T-cell (primary cell): ENCODE measurements at regions of chr3 and their contacts with region 1.

Region 1: DNA sequence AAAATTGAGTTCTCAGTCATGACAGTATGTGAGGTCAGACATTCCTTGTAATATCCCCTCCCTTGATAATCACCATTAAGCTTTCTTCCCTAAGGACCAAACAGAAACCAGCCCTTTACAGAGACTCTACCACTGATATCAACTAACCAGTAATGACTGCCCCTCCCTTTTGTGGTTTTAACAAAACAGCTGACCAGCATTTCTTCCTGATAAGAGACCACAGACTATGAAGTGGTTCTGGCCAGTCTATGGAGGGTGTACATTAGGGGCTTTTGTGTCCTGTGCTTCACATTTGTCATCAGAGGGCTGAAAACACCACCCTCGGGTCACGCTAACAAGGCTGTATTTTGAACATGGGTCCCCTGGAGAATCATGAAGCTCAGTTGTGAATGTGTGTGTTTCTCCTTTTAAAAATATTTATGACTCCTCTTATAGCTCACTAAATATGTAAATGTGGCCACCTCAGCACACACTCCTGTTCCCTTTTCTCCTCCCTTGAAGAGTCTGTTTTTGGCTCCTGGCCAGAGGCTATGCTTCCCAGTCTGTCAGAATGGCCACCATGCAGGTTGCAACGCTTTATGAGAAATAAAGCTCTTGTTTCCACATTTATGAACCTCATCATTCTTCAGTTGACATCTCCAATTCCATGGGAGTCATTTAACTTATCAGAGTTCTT is 239.3 kb downstream of the CPNE4 start:
- DNase-seq: no peak
- ATAC-seq: no peak
- H3K4me3 ChIP-seq: no peak overlapping the region
- H3K4me3 Mint-ChIP-seq: no peak overlapping the region
- H3K27ac ChIP-seq: no peak overlapping the region
- H3K27ac Mint-ChIP-seq: no peak overlapping the region
- H3K4me1 ChIP-seq: peaks cover 0 to 5% of the 10 kb centered on the region in 2 experiments
- H3K4me1 Mint-ChIP-seq: peaks cover 6 to 9% (median 8%) of the 10 kb centered on the region in 3 donors
- H3K27me3 ChIP-seq: peaks cover 0 to 5% of the 10 kb centered on the region in 2 experiments
- H3K27me3 Mint-ChIP-seq: peaks cover 12 to 14% of the 10 kb centered on the region in 2 donors

Region 2: DNA sequence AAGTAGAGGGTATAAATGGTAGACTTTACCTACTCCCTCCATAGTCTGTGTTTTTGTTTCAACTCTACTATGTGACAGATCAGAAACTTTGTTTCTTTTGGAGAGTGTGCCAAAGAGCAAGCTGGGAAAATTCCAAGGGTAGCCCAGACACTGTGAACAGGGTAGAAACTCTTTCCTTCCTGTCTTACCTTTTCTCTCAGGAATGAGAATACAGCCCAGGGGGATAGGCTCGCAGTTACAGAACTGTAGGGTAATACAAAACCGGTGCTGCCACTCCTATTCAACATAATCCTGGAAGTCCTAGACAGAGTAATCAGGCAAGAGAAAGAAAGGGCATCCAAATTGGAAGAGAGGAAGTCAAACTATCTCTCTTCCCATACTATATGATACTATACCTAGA is 17.0 kb before region 1 on chr3:
- CTCF ChIA-PET with region 1: interaction called in 1 of 2 experiments, 10 read pairs
- POLR2A ChIA-PET with region 1: no interaction called
- DNase-seq: no peak
- ATAC-seq: no peak
- H3K4me3 ChIP-seq: no peak overlapping the region
- H3K4me3 Mint-ChIP-seq: no peak overlapping the region
- H3K27ac ChIP-seq: no peak overlapping the region
- H3K27ac Mint-ChIP-seq: no peak overlapping the region
- H3K4me1 ChIP-seq: no peaks in the 10 kb centered on the region
- H3K4me1 Mint-ChIP-seq: no peaks in the 10 kb centered on the region
- H3K27me3 ChIP-seq: no peaks in the 10 kb centered on the region
- H3K27me3 Mint-ChIP-seq: peaks cover 8 to 21% of the 10 kb centered on the region in 2 donors

Region 3: DNA sequence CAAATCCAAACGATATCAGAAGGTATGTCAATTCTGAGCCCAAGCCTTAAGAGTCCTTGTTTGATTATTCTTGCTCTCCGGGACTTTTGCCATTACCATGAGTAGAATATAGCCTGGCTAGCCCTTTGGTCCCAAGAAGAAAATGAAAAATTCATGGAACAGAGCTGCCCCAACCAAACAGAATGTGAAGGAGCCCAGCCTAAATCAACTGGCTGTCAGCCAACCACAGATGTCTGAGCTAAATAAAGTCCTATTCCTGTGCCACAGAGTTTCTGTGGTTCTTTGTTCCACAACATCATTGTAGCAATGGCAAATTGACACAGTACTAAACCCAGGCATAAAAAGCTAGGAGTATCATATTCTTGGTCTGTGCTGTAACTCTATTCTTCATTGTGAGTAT is 54.1 kb after region 1 on chr3:
- CTCF ChIA-PET with region 1: no interaction called
- POLR2A ChIA-PET with region 1: no interaction called
- DNase-seq: no peak
- ATAC-seq: no peak
- H3K4me3 ChIP-seq: no peak overlapping the region
- H3K4me3 Mint-ChIP-seq: no peak overlapping the region
- H3K27ac ChIP-seq: no peak overlapping the region
- H3K27ac Mint-ChIP-seq: no peak overlapping the region
- H3K4me1 ChIP-seq: no peaks in the 10 kb centered on the region
- H3K4me1 Mint-ChIP-seq: no peaks in the 10 kb centered on the region
- H3K27me3 ChIP-seq: peaks cover 0 to 2% of the 10 kb centered on the region in 2 experiments
- H3K27me3 Mint-ChIP-seq: peaks cover 1 to 3% of the 10 kb centered on the region in 2 donors

Region 4: DNA sequence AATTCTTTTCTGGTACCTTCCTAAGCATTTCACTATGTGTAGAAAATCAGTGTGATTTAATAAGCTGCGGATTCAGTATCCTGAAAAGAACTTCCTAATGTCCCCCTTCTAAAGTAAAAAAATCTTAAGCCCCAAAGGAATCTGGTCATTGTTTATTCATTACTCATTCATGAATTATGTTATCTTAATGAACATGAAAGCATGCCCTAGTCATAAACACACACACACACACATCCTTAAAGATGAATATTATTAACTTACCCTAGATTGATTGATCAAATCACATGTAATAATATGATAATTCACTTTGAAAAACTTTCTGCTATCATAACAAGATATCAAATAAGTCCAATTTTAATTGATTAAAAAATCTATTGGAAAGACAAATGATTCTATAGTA is 1507.9 kb after region 1 on chr3:
- CTCF ChIA-PET with region 1: no interaction called
- POLR2A ChIA-PET with region 1: no interaction called
- DNase-seq: no peak
- ATAC-seq: no peak
- H3K4me3 ChIP-seq: no peak overlapping the region
- H3K4me3 Mint-ChIP-seq: no peak overlapping the region
- H3K27ac ChIP-seq: no peak overlapping the region
- H3K27ac Mint-ChIP-seq: no peak overlapping the region
- H3K4me1 ChIP-seq: no peaks in the 10 kb centered on the region
- H3K4me1 Mint-ChIP-seq: no peaks in the 10 kb centered on the region
- H3K27me3 ChIP-seq: no peaks in the 10 kb centered on the region
- H3K27me3 Mint-ChIP-seq: peaks cover 0 to 24% of the 10 kb centered on the region in 2 donors